Dorsolateral prefrontal cortex (tissue), 120 donors: ENCODE measurements at regions of chr5 and their contacts with region 1.

Region 1: GRCh38 chr5:80083101-80083890 is 48.1 kb downstream of the THBS4 start:
- DNase-seq: peak in 3 of 10 donors; percentile 10 to 30 (median 25)
- H3K4me3 ChIP-seq: peak overlapping the region in 58 of 59 donors; percentile 1 to 67 (median 46)
- H3K27ac ChIP-seq: peak overlapping the region; percentile 73 to 95 (median 91)
- H3K27me3 ChIP-seq: no peaks in the 10 kb centered on the region
- CTCF ChIP-seq: peak; percentile 64 to 90 (median 77)

Region 2: GRCh38 chr5:79020861-79021561 is 1062.3 kb before region 1 on chr5:
- intact Hi-C with region 1: loop called (anchors 2 to 5 kb)
- DNase-seq: peak; percentile 28 to 75 (median 63)
- H3K4me3 ChIP-seq: peak overlapping the region in 45 of 59 donors; percentile 3 to 57 (median 29)
- H3K27ac ChIP-seq: no peak overlapping the region
- H3K27me3 ChIP-seq: no peaks in the 10 kb centered on the region
- CTCF ChIP-seq: peak; percentile 55 to 94 (median 84)

Region 3: DNA sequence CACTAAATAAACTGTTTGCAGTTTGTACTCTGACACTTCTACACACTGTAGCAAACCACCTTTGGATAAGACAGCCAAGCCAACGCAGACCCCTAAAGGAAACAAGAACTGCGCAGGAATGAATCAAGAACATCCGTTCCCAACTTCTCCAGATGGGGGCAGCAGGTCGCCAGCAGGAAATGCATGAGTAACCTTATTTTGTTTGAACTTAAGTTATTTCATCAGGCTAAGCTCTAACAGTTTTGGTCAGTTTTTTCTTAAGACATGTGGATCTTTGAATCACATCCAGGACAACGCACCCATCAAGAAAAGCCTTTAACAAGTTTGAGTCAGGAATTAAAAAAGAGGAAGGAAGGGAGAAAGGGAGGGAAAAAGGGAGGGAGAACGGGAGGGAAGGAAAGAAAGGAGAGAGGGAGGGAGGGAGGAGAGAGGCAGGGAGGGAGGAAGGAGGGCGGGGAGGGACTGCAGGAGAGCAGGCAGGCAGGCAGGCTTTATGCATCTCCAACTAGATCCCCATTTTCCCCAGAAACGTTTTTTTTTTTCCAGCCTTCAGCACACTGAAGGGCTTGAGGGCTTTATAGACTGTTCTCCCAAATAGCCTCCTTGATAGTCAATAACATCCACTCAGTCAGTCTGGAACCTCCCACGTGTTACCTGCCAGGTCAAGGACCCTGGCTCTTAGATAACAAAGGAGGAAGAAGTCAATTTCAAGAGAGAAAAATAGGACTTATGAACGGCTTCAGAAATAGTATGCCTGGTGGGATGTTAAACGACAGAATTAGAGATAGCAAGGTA is 949.4 kb before region 1 on chr5:
- intact Hi-C with region 1: loop called (anchors 5 kb)
- DNase-seq: peak; percentile 27 to 76 (median 57)
- H3K4me3 ChIP-seq: peak overlapping the region in 57 of 59 donors; percentile 6 to 66 (median 41)
- H3K27ac ChIP-seq: peak overlapping the region in 54 of 59 donors; percentile 3 to 88 (median 68)
- H3K27me3 ChIP-seq: no peaks in the 10 kb centered on the region
- CTCF ChIP-seq: peak in 55 of 56 donors; percentile 37 to 79 (median 65)

Region 4: DNA sequence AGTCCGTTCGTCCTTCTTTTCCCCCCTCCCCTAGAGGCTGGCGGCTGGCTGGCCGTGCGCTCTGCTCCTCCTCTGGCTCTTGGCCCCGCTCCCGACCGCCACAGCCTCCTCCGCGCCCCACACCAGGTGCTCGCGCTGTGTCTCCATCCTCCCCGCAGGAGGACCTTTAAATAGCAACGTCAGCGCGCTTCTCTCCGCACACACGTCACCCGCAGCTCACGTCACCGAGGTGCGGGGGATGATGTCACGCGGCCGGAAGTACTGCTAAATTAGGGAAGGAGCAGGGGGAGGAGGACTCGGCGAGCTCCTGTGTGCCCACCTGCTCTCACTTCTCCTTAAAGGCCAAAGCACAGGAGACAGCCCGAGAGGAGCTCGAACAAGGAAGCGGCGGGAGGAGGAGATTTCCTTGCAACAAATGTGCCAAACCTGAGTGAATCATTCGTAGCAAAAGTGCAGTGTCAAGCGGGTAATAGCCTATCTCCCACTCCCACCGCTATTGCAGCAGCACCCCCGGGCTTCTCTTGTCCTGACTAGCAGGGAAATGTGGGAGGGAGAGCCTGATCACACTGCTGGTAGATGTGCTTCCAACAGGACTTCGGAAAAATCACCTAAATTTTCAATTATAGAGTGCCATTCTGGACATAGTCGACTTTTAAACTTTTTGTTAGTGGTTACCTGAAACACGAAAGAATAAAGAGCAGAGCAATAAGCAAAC is 568.7 kb before region 1 on chr5:
- intact Hi-C with region 1: loop called in 1 of 2 experiments (anchors 5 kb)
- DNase-seq: peak; percentile 76 to 95 (median 90)
- H3K4me3 ChIP-seq: peak overlapping the region; percentile 66 to 98 (median 86)
- H3K27ac ChIP-seq: peak overlapping the region; percentile 53 to 99 (median 96)
- H3K27me3 ChIP-seq: no peaks in the 10 kb centered on the region
- CTCF ChIP-seq: peak in 3 of 56 donors; percentile 1 to 4 (median 1)

Region 5: DNA sequence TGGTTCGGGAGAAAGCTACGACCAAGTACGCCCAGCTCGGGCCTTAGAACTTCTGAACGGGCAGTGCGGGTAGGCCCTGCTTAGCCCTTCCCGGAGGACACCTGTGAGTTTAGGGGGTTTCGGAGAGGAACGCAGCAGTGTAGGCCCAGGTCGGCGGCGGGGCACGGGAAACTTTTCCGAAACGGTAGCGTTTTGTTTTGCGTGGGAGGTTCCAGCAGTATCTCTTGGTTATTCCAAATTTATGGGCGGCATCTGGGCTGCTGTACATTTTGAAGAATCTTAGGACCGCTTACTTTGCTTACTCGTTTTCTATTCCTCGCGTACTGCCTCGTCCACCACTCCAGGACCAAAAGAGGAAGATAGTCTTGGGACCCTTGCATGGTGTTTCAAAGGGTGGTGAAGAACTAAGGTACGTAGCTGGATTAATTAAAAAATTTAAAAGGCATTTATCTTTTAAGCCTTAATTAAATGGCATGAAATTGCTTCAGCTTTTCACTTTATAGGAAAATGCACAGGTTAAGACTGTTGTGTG is 470.6 kb before region 1 on chr5:
- intact Hi-C with region 1: loop called in 1 of 2 experiments (anchors 5 kb)
- DNase-seq: peak in 2 of 10 donors; percentile 32 to 58
- H3K4me3 ChIP-seq: peak overlapping the region; percentile 53 to 98 (median 88)
- H3K27ac ChIP-seq: peak overlapping the region in 57 of 59 donors; percentile 33 to 95 (median 80)
- H3K27me3 ChIP-seq: no peaks in the 10 kb centered on the region
- CTCF ChIP-seq: peak in 1 of 56 donors; percentile 1

Region 6: DNA sequence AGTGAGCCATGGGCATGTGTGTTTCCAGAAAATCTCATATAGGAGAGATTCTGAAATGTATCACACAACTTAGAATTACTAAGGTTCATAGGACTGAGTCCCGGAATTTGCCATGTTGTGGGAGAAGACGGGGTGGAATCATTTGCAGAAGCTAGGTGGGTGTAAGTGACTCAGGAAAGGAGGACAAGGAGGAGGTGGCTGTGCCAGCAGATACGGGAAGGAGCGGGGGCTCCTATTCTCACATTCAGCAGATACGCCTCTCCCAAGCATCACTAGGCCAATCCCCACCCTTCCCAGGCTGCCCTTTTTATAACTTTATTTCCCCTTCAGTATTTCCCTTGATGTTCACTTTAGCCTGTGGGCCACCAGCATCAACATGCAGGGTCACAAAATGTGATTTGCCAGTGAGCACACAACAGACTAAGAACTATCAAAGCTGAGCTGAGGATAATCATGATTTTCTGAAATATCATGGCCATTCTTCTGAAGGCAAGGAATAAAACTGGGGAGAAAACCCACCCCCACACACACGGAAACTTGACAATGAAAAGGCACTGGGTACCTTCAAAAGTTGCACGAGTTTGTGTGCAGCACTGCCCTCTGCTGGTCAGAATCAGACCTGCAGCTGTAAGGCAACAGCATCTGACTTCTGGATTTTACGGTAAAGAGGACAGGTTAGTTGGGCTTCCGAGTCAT is 225.4 kb before region 1 on chr5:
- intact Hi-C with region 1: loop called (anchors 2 to 5 kb)
- DNase-seq: peak; percentile 58 to 88 (median 78)
- H3K4me3 ChIP-seq: no peak overlapping the region
- H3K27ac ChIP-seq: peak overlapping the region in 15 of 59 donors; percentile 7 to 65 (median 39)
- H3K27me3 ChIP-seq: no peaks in the 10 kb centered on the region
- CTCF ChIP-seq: peak; percentile 89 to 99 (median 97)

Region 7: GRCh38 chr5:79878721-79879336 is 204.5 kb before region 1 on chr5:
- intact Hi-C with region 1: no loop called
- DNase-seq: no peak
- H3K4me3 ChIP-seq: no peak overlapping the region
- H3K27ac ChIP-seq: no peak overlapping the region
- H3K27me3 ChIP-seq: no peaks in the 10 kb centered on the region
- CTCF ChIP-seq: peak in 14 of 56 donors; percentile 11 to 27 (median 16)

Region 8: DNA sequence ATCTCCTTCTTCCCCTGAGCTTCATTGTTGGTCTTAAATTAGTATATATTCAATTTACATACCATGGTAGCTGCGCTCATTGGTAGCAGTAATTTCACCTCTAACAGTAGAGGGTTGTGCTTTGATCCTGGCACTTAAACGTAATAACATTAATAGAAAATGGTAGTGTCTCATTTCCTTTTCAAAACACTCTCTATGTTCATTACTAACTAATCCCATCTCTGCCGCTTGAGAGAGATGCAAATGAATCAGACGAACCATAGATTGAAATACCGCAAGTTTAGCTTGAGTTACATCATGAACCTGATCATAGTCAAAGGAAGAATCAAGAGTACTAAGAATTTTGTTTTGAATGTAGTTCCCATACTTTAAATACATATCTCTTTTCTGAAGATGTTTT is 45.9 kb before region 1 on chr5:
- intact Hi-C with region 1: no loop called
- DNase-seq: no peak
- H3K4me3 ChIP-seq: peak overlapping the region in 3 of 59 donors; percentile 18 to 64 (median 56)
- H3K27ac ChIP-seq: no peak overlapping the region
- H3K27me3 ChIP-seq: peaks cover 0 to 47% (median 22%) of the 10 kb centered on the region in 45 donors
- CTCF ChIP-seq: no peak